MCF 10A (cell line): ENCODE measurements at regions of chr10 and their contacts with region 1.

Region 1: GRCh38 chr10:6202684-6203330 is at the start of gene PFKFB3:
- DNase-seq: peak; percentile 94
- H3K4me3 Mint-ChIP-seq: peak within 1 kb of the TSS; percentile 94
- H3K27ac Mint-ChIP-seq: no peak within 1 kb of the TSS
- H3K4me1 Mint-ChIP-seq: peaks cover 19% of the 10 kb centered on the region
- H3K27me3 Mint-ChIP-seq: no peaks in the 10 kb centered on the region
- CTCF ChIP-seq: peak; percentile 96
- total RNA-seq, gene PFKFB3: 15.8 and 17.8 TPM in 2 replicates

Region 2: DNA sequence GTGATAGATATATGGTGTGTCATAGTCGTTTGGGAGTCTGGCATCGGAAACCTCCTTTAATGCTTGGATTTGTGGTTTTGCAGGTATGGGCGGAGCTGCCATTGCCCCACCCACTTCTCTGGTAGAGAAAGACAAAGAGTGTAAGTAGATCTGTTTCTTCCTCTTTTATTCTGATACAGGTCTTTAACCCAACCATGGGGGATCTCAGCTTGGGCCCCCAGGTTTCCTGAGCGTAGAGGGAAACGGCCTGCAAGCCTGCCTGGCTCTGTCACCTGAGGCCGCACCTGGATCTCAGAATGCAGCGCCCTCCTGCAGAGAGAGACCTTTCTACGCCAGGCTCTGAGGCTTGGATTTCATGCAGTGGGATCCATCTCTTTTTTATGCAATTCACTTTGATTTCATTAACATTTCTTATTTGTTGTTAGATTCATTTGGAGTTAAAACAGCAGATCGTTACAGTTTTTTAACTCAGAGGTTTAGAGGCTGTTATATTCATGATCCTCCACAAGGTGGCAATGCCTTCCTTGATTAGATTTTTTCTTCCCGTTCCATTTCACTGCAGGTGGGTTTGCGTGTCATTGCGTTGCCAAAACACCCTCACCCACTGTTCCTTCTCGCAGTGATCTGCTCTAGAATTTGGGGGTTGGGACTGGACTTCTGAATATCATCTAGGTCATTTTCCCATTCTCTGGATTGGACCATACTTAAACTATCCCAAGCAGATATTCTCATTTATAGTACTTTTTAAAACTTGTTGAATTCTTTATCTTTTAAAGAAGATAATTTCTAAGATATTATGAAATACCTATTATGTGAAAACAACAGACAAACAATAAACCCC is 94.0 kb before region 1 on chr10:
- CTCF ChIA-PET with region 1: interaction called, 6 read pairs
- POLR2A ChIA-PET with region 1: no interaction called
- intact Hi-C with region 1: loop called (anchors 1 kb)
- DNase-seq: peak; percentile 51
- H3K4me3 Mint-ChIP-seq: no peak overlapping the region
- H3K27ac Mint-ChIP-seq: no peak overlapping the region
- H3K4me1 Mint-ChIP-seq: peaks cover 11% of the 10 kb centered on the region
- H3K27me3 Mint-ChIP-seq: no peaks in the 10 kb centered on the region
- CTCF ChIP-seq: peak; percentile 76

Region 3: DNA sequence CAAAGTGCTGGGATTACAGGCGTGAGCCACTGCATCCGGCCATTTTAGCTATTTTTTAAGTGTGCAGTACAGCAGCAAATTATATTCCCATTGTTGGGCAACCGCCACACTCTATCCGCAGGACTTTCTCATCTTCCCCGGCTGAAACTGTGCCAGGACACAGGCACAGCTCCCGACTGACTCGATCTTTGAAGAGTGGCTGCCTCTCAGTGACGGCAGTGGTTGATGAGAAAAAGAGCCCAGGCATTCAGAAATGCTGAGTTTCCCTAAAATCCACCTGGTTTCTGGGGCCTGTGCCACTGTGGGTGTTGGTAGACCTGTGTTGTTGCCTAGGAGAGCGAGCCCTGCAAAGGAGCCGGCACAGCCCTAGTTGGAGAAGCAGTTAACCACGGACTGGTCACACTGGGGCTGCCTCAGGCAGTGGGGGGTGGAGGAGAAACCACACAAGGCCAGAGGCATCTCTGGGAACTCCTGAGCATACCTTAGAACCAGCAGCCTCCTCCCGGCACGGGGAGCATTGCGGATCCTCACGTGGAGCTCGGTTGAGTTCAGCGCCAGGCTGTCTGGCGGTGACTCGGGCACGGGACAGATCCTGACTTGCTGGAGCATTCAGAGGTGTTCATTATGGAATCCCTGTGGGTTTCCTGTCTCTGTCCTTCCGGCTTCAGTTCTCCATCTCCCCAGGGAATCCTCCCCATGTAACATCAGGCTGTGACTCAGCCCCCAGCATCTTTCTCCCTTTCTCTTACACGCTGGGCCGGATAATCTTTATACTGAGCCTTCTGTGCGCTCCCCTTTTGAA is 16.1 kb after region 1 on chr10:
- CTCF ChIA-PET with region 1: interaction called, 5 read pairs
- POLR2A ChIA-PET with region 1: interaction called, 25 read pairs
- intact Hi-C with region 1: no loop called
- DNase-seq: peak; percentile 87
- H3K4me3 Mint-ChIP-seq: peak overlapping the region; percentile 3
- H3K27ac Mint-ChIP-seq: no peak overlapping the region
- H3K4me1 Mint-ChIP-seq: peaks cover 18% of the 10 kb centered on the region
- H3K27me3 Mint-ChIP-seq: no peaks in the 10 kb centered on the region
- CTCF ChIP-seq: no peak

Region 4: DNA sequence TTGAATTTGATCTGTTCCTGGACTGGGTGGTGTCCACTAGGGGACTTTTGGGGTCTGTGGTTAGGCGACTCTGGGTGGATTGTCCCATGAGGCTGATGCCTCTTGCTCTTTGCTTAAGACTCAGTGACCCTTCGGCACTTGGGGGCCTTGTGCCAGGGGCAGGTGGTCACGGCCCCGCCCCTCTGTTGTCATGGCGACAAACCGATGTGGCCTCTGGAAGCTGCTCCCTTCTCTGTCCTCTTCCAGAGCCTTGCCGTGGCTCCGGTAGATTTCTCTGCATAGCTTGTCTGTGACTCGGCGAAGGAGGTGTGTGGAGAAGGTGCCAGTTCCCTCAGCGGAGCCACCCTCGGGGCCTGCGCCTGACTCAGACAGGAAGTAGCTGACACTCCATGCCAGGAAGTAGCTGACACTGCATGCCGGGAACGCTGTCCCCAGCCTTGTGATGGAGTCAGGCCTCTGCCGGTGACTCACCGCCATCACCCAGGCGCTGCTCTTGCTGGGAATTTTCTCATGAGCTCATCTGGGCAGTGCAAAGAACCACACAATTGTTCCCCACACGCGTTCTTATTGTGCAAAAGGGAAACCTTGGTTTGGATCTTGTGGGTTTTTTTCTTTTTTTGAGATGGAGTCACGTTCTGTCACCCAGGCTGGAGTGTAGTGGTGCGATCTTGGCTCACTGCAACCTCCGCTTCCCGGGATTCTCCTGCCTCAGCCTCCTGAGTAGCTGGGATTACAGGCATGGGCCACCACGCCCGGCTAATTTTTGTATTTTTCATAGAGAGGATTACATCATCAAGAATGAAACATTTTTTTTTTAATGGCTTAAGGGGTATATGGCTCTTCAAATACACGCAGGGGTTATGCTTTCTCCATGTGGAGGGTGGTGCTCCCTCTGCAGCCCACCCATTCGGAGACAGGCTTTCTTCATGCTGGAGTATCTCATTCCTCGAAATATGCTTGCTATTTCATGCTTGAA is 72.5 kb after region 1 on chr10:
- CTCF ChIA-PET with region 1: no interaction called
- POLR2A ChIA-PET with region 1: interaction called, 5 read pairs
- intact Hi-C with region 1: loop called (anchors 2 kb)
- DNase-seq: peak; percentile 99
- H3K4me3 Mint-ChIP-seq: peak overlapping the region; percentile 68
- H3K27ac Mint-ChIP-seq: peak overlapping the region; percentile 94
- H3K4me1 Mint-ChIP-seq: peaks cover 11% of the 10 kb centered on the region
- H3K27me3 Mint-ChIP-seq: no peaks in the 10 kb centered on the region
- CTCF ChIP-seq: no peak

Region 5: DNA sequence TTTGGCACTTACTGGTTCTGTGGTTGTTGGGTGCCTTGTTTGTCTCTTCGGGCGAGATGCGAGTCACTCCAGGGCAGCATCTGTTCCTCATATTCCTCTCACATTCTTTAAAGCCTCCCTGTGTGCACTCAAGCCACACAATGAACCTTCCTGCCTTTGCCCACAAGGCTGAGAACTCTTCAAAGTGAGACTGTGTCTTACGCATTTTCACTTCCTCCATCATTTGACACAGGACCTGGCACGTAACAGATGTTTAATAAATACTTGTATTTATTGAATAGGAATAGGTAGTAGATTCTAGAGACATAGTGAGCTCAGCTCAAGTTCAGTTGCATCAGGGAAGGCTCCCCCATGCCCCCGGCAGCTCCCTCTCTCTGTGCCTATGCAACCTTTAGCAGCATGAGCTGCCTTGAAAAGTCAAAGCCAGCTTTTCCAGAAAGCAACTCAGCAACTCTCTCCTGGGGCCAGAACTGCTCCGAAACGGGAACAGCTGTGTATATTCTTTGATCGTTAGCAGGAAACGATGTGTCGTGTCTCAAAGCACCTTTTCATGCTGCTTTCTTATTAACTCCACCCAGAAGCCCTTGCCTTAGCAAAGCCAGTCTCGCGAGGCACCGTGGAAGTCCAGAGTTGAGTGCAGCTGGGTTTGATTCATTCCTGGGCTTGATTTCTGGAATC is 97.4 kb after region 1 on chr10:
- CTCF ChIA-PET with region 1: interaction called, 12 read pairs
- POLR2A ChIA-PET with region 1: interaction called, 6 read pairs
- intact Hi-C with region 1: no loop called
- DNase-seq: no peak
- H3K4me3 Mint-ChIP-seq: no peak overlapping the region
- H3K27ac Mint-ChIP-seq: peak overlapping the region; percentile 74
- H3K4me1 Mint-ChIP-seq: peaks cover 33% of the 10 kb centered on the region
- H3K27me3 Mint-ChIP-seq: no peaks in the 10 kb centered on the region
- CTCF ChIP-seq: no peak

Region 6: DNA sequence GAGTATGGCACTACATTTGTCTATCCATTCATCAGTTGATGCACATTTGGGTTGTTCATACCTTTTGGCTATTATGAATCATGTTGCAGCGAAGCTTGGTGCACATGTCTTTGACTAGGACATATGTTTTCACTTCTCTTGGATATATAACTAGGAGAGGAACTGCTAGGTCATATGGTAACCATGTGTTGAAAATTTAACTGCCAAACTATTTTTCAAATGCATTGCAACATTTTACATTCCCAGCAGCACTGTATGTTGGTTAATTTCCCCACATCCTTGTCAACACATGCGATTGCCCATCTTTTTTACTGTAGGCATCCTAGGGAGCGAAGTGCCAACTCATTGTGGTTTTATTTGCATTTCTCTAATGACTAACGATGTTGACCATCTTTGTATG is 193.8 kb after region 1 on chr10:
- CTCF ChIA-PET with region 1: interaction called, 114 read pairs
- POLR2A ChIA-PET with region 1: interaction called, 100 read pairs
- intact Hi-C with region 1: loop called (anchors 1 kb)
- DNase-seq: peak; percentile 92
- H3K4me3 Mint-ChIP-seq: no peak overlapping the region
- H3K27ac Mint-ChIP-seq: peak overlapping the region; percentile 1
- H3K4me1 Mint-ChIP-seq: peaks cover 26% of the 10 kb centered on the region
- H3K27me3 Mint-ChIP-seq: no peaks in the 10 kb centered on the region
- CTCF ChIP-seq: no peak